PC-9 (cell line): ENCODE measurements at regions of chrX and their contacts with region 1.

Region 1: GRCh38 chrX:119753571-119754257 is 4.7 kb upstream of the SOWAHD start:
- DNase-seq: peak; percentile 25 to 64
- H3K4me3 ChIP-seq: no peak overlapping the region
- H3K27ac ChIP-seq: no peak overlapping the region
- H3K4me1 ChIP-seq: peaks cover 9% of the 10 kb centered on the region
- H3K27me3 ChIP-seq: no peaks in the 10 kb centered on the region
- CTCF ChIP-seq: peak; percentile 81

Region 2: DNA sequence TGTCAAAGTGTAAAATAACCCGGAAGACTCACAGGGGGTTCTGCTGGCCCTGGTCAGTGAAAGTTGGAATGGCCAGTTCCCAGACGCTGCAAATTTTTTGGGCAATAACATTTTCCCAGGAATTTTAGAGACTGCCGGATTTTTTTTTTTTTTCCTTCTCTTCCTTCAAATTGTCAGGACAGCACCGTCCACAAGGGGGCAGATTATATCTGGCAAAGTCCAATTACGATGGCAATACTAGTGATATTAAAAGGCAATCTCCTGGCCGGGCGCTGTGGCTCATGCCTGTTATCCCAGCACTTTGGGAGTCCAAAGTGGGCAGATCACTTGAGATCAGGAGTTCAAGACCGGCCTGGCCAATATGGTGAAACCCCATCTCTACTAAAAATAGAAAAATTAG is 265.0 kb before region 1 on chrX:
- CTCF ChIA-PET with region 1: interaction called, 7 read pairs
- POLR2A ChIA-PET with region 1: interaction called, 26 read pairs
- intact Hi-C with region 1: no loop called
- DNase-seq: peak; percentile 41 to 58
- H3K4me3 ChIP-seq: no peak overlapping the region
- H3K27ac ChIP-seq: no peak overlapping the region
- H3K4me1 ChIP-seq: no peaks in the 10 kb centered on the region
- H3K27me3 ChIP-seq: no peaks in the 10 kb centered on the region
- CTCF ChIP-seq: peak; percentile 86

Region 3: GRCh38 chrX:119693040-119693995 is 60.4 kb before region 1 on chrX and contains the start of gene SEPTIN6:
- CTCF ChIA-PET with region 1: interaction called, 7 read pairs
- POLR2A ChIA-PET with region 1: interaction called, 13 read pairs
- intact Hi-C with region 1: loop called (anchors 5 kb)
- DNase-seq: peak; percentile 65 to 85
- H3K4me3 ChIP-seq: peak within 1 kb of the TSS; percentile 81
- H3K27ac ChIP-seq: no peak within 1 kb of the TSS
- H3K4me1 ChIP-seq: peaks cover 13% of the 10 kb centered on the region
- H3K27me3 ChIP-seq: no peaks in the 10 kb centered on the region
- CTCF ChIP-seq: no peak
- total RNA-seq, gene SEPTIN6: 32.8 and 43.7 TPM in 2 replicates

Region 4: DNA sequence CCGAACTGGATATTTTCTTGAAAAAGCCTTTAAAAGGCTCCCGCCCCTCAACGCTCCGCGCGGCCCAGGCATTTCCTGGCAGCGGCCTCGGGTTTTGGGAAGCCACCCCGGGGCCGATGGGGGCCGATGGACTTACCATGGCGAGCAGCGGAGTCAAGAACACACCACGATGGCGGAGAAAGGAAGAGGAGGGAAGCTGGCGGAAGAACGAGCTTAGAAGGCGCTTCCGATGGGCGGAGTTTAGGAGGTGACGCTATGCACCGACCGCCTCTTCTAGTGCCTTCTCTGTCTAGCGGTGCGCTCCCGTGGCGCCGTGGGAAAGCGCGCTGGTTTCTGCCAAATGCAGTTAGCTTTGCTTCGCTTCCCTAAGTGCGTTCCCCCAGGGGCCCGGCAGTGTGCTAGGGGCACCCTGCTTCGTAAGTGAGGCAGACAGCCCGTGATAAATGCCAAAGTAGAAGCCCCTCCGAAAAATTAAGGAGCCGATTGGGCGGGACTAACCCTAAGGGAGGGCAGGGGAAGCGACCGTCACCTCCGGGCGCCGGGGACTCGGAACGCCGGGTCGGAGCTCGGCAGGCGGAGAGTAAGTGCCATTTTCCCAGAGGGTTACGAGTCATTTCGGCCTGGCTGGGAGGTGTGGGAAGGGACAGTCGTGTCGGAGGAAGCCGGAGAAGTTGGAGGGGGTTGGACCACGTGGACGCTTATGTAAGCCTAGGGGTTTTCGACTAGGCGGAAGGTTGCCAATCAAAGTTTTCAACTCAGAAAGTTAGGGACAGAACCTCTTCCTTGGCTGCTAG is 37.9 kb after region 1 on chrX and contains the start of gene RPL39:
- CTCF ChIA-PET with region 1: interaction called, 11 read pairs
- POLR2A ChIA-PET with region 1: interaction called, 10 read pairs
- intact Hi-C with region 1: no loop called
- DNase-seq: peak; percentile 84 to 86
- H3K4me3 ChIP-seq: peak within 1 kb of the TSS; percentile 96
- H3K27ac ChIP-seq: peak within 1 kb of the TSS; percentile 94
- H3K4me1 ChIP-seq: peaks cover 34% of the 10 kb centered on the region
- H3K27me3 ChIP-seq: no peaks in the 10 kb centered on the region
- CTCF ChIP-seq: no peak
- total RNA-seq, gene RPL39: 3,176 and 3,660 TPM in 2 replicates

Region 5: DNA sequence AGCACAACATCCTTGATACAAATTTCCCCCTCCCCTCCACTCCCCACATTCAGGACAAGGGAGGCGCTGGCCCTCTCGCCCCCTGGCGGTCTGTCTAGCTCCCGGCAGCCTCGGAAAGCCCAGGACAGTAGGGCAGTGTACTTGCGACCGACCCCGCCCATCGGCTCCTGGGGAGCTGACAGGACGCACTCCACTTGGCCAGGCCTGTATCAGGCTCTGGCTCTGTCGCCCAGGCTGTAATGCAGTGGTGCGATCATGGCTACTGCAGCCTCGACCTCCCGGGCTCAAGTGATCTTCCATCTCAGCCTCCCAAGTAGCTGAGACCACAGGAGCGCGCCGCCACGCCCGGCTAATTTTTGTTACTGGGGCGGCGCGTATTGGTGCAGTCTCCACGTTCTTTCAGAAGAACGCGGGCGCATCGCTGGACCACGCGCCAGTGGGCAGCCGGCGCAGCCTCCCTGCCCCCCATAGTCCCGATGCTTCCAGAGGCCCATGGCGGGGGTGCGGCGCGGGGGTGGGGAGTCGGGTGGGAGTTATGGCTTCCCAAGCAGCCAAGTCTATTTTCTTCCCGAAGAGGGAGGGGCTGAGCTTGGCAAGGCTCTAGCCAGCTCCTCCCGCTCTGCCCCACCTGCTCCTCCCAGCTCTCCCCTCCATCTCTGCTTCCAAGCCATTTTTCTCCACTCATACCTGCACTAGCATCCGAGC is 134.2 kb after region 1 on chrX:
- CTCF ChIA-PET with region 1: no interaction called
- POLR2A ChIA-PET with region 1: interaction called, 31 read pairs
- intact Hi-C with region 1: no loop called
- DNase-seq: peak; percentile 65 to 77
- H3K4me3 ChIP-seq: peak overlapping the region; percentile 66
- H3K27ac ChIP-seq: no peak overlapping the region
- H3K4me1 ChIP-seq: no peaks in the 10 kb centered on the region
- H3K27me3 ChIP-seq: no peaks in the 10 kb centered on the region
- CTCF ChIP-seq: peak; percentile 83